Heart right ventricle (tissue), 16 donors: ENCODE measurements at regions of chr19 and their contacts with region 1.

Region 1: GRCh38 chr19:18044825-18045304 is 36.9 kb downstream of the ARRDC2 start:
- DNase-seq: peak; percentile 73 to 82
- ATAC-seq: peak in 7 of 8 donors; percentile 50 to 70 (median 63)
- H3K4me3 ChIP-seq: peak overlapping the region in 9 of 10 donors; percentile 33 to 57 (median 52)
- H3K27ac ChIP-seq: peak overlapping the region; percentile 72 to 89 (median 82)
- H3K4me1 ChIP-seq: peaks cover 6 to 37% (median 30%) of the 10 kb centered on the region in 9 donors
- H3K27me3 ChIP-seq: no peaks in the 10 kb centered on the region
- CTCF ChIP-seq: no peak

Region 2: DNA sequence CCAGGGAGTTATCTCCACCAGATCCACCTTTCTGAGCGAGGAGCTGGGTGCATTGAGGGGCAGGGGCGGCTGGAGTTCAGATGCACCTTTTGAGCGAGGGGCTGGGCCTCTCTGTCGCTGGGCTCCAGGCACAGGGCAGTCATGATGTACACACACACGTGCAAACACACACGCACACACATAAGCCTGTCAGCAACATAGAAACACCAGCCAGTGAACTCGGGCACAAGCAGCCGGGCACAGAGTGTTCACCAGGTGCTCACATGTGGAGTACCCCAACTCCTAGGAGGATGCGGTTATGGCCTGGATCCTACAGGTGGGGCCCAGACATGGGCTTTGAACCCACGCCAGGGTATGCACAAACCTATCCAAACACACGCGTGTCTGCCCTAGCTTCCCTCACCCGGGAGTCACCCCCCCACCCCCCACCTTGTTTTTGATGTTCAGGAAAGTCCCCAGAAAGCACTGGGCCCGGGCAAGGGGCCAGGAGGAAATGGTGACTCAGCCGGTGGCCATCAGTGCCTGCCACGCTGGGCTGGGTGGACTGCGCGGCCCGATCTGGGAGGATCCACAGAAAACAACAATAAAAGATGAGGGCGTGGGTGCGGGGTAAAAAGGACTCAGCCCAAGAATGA is 23.6 kb before region 1 on chr19:
- intact Hi-C with region 1: loop called in 3 of 10 experiments (anchors 1 to 2 kb)
- DNase-seq: peak; percentile 90 to 91
- ATAC-seq: peak; percentile 30 to 72 (median 52)
- H3K4me3 ChIP-seq: peak overlapping the region in 1 of 10 donors; percentile 36
- H3K27ac ChIP-seq: peak overlapping the region; percentile 81 to 96 (median 94)
- H3K4me1 ChIP-seq: peaks cover 52 to 80% (median 71%) of the 10 kb centered on the region in 9 donors
- H3K27me3 ChIP-seq: no peaks in the 10 kb centered on the region
- CTCF ChIP-seq: no peak